Activated B cell treated with CpG ODN at 0.5 μM for 24 hours (primary cell): ENCODE measurements at regions of chr4 and their contacts with region 1.

Region 1: DNA sequence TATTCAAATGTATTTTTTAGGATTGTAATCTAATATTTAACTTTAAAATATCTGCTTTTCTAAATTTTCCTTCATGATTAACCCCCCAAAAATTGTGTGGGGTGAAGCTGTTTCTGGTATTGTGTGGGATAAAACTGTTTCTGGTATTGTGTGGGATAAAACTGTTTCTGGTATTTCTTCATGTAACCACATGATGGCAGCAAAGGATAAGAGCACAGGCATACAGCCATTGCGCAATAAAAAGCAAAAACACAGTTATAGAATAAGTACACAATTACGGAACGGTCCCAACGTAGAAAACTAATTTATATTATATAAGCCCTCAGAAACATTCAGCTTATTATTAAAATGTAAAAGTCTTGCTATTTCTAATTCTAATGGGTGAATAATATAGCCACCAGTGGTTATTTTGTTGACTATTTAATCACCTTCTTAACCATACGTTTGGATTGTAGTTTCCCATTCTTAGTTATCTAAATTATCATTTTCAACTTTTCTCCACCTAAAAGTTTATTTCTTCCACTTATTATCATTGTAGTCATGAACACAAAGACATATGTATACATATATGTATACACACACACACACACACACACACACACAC is 333.9 kb upstream of the FSTL5 start:
- DNase-seq: no peak
- ATAC-seq: peak; percentile 50
- H3K4me3 Mint-ChIP-seq: no peak overlapping the region
- H3K27ac Mint-ChIP-seq: no peak overlapping the region
- H3K4me1 Mint-ChIP-seq: no peaks in the 10 kb centered on the region
- H3K27me3 Mint-ChIP-seq: no peaks in the 10 kb centered on the region
- CTCF ChIP-seq: no peak

Region 2: DNA sequence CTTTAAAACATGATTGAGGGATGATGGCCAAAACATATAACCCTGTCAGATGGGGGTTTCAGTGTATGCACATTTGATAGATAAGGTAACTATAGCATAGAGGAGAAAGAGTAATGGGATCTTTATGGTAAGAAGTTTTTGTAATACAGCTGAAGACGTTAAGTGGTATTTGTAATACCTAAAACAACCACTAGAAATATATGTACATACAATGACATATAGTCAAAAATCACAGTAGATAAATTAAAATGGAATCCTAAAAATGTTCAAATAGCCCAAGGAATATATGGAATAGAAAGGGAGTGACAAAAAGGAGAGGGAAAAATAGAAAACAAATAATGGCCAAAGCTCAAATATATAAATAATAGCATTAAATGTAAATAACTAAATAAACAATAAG is 37.5 kb after region 1 on chr4:
- CTCF ChIA-PET with region 1: no interaction called
- POLR2A ChIA-PET with region 1: no interaction called
- intact Hi-C with region 1: no loop called
- DNase-seq: no peak
- ATAC-seq: no peak
- H3K4me3 Mint-ChIP-seq: no peak overlapping the region
- H3K27ac Mint-ChIP-seq: no peak overlapping the region
- H3K4me1 Mint-ChIP-seq: no peaks in the 10 kb centered on the region
- H3K27me3 Mint-ChIP-seq: no peaks in the 10 kb centered on the region
- CTCF ChIP-seq: no peak

Region 3: GRCh38 chr4:163042306-163042705 is 544.6 kb after region 1 on chr4:
- CTCF ChIA-PET with region 1: interaction called, 3 read pairs
- POLR2A ChIA-PET with region 1: no interaction called
- intact Hi-C with region 1: loop called (anchors 1 kb)
- DNase-seq: no peak
- ATAC-seq: no peak
- H3K4me3 Mint-ChIP-seq: no peak overlapping the region
- H3K27ac Mint-ChIP-seq: no peak overlapping the region
- H3K4me1 Mint-ChIP-seq: no peaks in the 10 kb centered on the region
- H3K27me3 Mint-ChIP-seq: peaks cover 11% of the 10 kb centered on the region
- CTCF ChIP-seq: no peak

Region 4: DNA sequence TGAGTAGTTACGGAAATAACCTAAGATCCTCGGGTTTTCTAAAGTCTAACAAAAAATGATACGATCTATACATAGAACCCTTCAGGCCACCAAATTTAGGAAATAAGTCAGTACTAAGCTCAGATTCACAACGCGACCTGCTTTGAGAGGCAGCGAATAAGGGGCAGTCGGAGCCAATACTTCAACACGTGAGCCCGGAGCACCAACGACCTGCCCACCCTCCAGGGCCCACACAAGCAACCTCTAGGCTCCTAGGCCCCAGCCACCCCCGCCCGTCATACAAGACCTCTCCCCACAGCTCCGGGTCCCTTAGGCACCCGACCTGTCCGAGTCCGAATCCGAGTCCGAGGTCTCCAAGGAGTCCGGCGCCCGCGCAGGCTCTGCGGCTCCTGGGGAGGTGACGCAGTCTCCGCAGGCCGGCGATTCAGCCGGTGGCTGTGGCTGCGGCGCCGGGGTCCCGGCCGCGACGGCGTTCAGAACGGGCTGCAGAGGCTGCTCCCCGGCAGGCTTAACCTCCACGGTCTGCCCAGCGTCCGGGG is 668.4 kb after region 1 on chr4:
- CTCF ChIA-PET with region 1: no interaction called
- POLR2A ChIA-PET with region 1: no interaction called
- intact Hi-C with region 1: loop called (anchors 5 kb)
- DNase-seq: peak; percentile 63
- ATAC-seq: peak; percentile 64
- H3K4me3 Mint-ChIP-seq: peak overlapping the region; percentile 91
- H3K27ac Mint-ChIP-seq: peak overlapping the region; percentile 95
- H3K4me1 Mint-ChIP-seq: peaks cover 27% of the 10 kb centered on the region
- H3K27me3 Mint-ChIP-seq: no peaks in the 10 kb centered on the region
- CTCF ChIP-seq: no peak

Region 5: GRCh38 chr4:163332500-163333406 is 835.1 kb after region 1 on chr4 and contains the start of gene NPY1R:
- CTCF ChIA-PET with region 1: no interaction called
- POLR2A ChIA-PET with region 1: no interaction called
- intact Hi-C with region 1: loop called (anchors 1 kb)
- DNase-seq: no peak
- ATAC-seq: no peak
- H3K4me3 Mint-ChIP-seq: peak within 1 kb of the TSS; percentile 71
- H3K27ac Mint-ChIP-seq: no peak within 1 kb of the TSS
- H3K4me1 Mint-ChIP-seq: peaks cover 18% of the 10 kb centered on the region
- H3K27me3 Mint-ChIP-seq: peaks cover 46% of the 10 kb centered on the region
- CTCF ChIP-seq: no peak
- total RNA-seq, gene NPY1R: not detected in 2 replicates

Region 6: GRCh38 chr4:163694385-163694784 is 1196.7 kb after region 1 on chr4:
- CTCF ChIA-PET with region 1: no interaction called
- POLR2A ChIA-PET with region 1: no interaction called
- intact Hi-C with region 1: loop called (anchors 10 kb)
- DNase-seq: no peak
- ATAC-seq: no peak
- H3K4me3 Mint-ChIP-seq: no peak overlapping the region
- H3K27ac Mint-ChIP-seq: no peak overlapping the region
- H3K4me1 Mint-ChIP-seq: no peaks in the 10 kb centered on the region
- H3K27me3 Mint-ChIP-seq: peaks cover 3% of the 10 kb centered on the region
- CTCF ChIP-seq: no peak

Region 7: GRCh38 chr4:163755013-163755412 is 1257.3 kb after region 1 on chr4:
- CTCF ChIA-PET with region 1: no interaction called
- POLR2A ChIA-PET with region 1: no interaction called
- intact Hi-C with region 1: loop called (anchors 1 kb)
- DNase-seq: no peak
- ATAC-seq: peak; percentile 56
- H3K4me3 Mint-ChIP-seq: peak overlapping the region; percentile 8
- H3K27ac Mint-ChIP-seq: no peak overlapping the region
- H3K4me1 Mint-ChIP-seq: peaks cover 3% of the 10 kb centered on the region
- H3K27me3 Mint-ChIP-seq: peaks cover 4% of the 10 kb centered on the region
- CTCF ChIP-seq: no peak

Region 8: GRCh38 chr4:164012396-164013027 is 1514.8 kb after region 1 on chr4:
- CTCF ChIA-PET with region 1: no interaction called
- POLR2A ChIA-PET with region 1: no interaction called
- intact Hi-C with region 1: loop called (anchors 1 kb)
- DNase-seq: no peak
- ATAC-seq: no peak
- H3K4me3 Mint-ChIP-seq: no peak overlapping the region
- H3K27ac Mint-ChIP-seq: no peak overlapping the region
- H3K4me1 Mint-ChIP-seq: no peaks in the 10 kb centered on the region
- H3K27me3 Mint-ChIP-seq: no peaks in the 10 kb centered on the region
- CTCF ChIP-seq: no peak